ENCODE measurements at regions of chr2 and their contacts with region 1.

Region 1: GRCh38 chr2:136207030-136207623 is 89.2 kb upstream of the CXCR4 start:
- DNase-seq: peak; percentile 96
- H3K4me3 ChIP-seq: peak overlapping the region; percentile 58
- H3K27ac ChIP-seq: peak overlapping the region; percentile 97
- H3K4me1 ChIP-seq: peaks cover 66% of the 10 kb centered on the region
- CTCF ChIP-seq: peak; percentile 11; the same call in 1 of the 2 replicates

Region 2: DNA sequence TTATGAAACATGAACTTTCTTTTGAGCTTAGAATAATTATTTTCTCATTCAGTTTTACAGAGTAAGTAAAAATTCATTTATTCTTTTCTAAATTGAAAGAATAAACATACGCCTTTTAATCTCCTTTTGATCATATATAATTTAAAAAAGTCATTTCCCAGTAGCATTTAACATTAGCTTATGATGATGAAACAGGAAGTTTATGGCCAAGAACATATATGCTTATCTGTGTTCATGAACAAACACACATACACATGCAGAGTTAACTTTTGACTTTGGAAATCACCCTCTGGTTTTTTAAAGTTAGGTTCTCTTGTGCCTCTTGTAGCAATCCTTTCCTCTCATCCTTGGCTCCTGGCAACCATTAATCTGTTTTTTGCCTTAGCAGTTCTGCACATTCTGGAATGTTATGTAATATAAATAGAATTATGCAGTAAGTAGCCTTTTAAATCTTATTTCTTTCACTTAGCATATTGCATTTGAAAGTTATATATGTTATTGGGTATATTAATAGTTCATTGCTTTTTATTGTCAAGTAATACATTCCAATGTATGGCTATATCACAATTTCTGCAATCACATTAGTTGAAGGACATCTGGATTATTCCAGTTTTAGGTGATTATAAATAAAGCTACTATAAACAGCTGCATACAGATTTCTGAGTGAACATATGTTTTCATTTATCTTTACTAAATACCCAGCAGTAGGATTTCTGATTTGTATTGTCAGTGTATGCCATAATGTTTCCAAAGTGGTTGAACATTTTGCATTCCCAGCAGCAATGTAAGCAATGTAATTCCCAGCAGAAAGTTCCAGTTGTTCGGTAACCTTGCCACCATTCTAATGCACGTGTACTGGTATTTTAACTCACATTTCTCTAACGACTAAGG is 886.4 kb before region 1 on chr2:
- CTCF ChIA-PET with region 1: no interaction called
- POLR2A ChIA-PET with region 1: no interaction called
- intact Hi-C with region 1: no loop called
- DNase-seq: no peak
- H3K4me3 ChIP-seq: no peak overlapping the region
- H3K27ac ChIP-seq: no peak overlapping the region
- H3K4me1 ChIP-seq: no peaks in the 10 kb centered on the region
- CTCF ChIP-seq: no peak

Region 3: GRCh38 chr2:135913727-135914365 is 293.3 kb before region 1 on chr2:
- CTCF ChIA-PET with region 1: no interaction called
- POLR2A ChIA-PET with region 1: no interaction called
- intact Hi-C with region 1: loop called (anchors 1 kb)
- DNase-seq: peak; percentile 73
- H3K4me3 ChIP-seq: no peak overlapping the region
- H3K27ac ChIP-seq: peak overlapping the region; percentile 5
- H3K4me1 ChIP-seq: peaks cover 27% of the 10 kb centered on the region
- CTCF ChIP-seq: peak; percentile 96

Region 4: GRCh38 chr2:136029149-136029548 is 178.0 kb before region 1 on chr2:
- CTCF ChIA-PET with region 1: no interaction called
- POLR2A ChIA-PET with region 1: no interaction called
- intact Hi-C with region 1: no loop called
- DNase-seq: no peak
- H3K4me3 ChIP-seq: no peak overlapping the region
- H3K27ac ChIP-seq: no peak overlapping the region
- H3K4me1 ChIP-seq: peaks cover 9% of the 10 kb centered on the region
- CTCF ChIP-seq: no peak

Region 5: GRCh38 chr2:136117909-136118818 is 89.0 kb before region 1 on chr2 and contains the start of gene CXCR4:
- CTCF ChIA-PET with region 1: no interaction called
- POLR2A ChIA-PET with region 1: interaction called, 5 read pairs
- intact Hi-C with region 1: loop called (anchors 1 kb)
- DNase-seq: peak; percentile 89
- H3K4me3 ChIP-seq: peak within 1 kb of the TSS; percentile 92
- H3K27ac ChIP-seq: peak within 1 kb of the TSS; percentile 92
- H3K4me1 ChIP-seq: peaks cover 66% of the 10 kb centered on the region
- CTCF ChIP-seq: peak; percentile 33; the same call in 1 of the 2 replicates
- total RNA-seq, gene CXCR4: 367 and 432 TPM in 2 replicates

Region 6: GRCh38 chr2:136225950-136226835 is 19.1 kb after region 1 on chr2:
- CTCF ChIA-PET with region 1: interaction called, 7 read pairs
- POLR2A ChIA-PET with region 1: interaction called, 26 read pairs
- intact Hi-C with region 1: no loop called
- DNase-seq: no peak
- H3K4me3 ChIP-seq: no peak overlapping the region
- H3K27ac ChIP-seq: no peak overlapping the region
- H3K4me1 ChIP-seq: peaks cover 36% of the 10 kb centered on the region
- CTCF ChIP-seq: no peak

Region 7: GRCh38 chr2:136327162-136327852 is 120.2 kb after region 1 on chr2:
- CTCF ChIA-PET with region 1: interaction called, 4 read pairs
- POLR2A ChIA-PET with region 1: interaction called, 4 read pairs
- intact Hi-C with region 1: loop called (anchors 2 kb)
- DNase-seq: peak; percentile 78
- H3K4me3 ChIP-seq: peak overlapping the region; percentile 63
- H3K27ac ChIP-seq: peak overlapping the region; percentile 81
- H3K4me1 ChIP-seq: peaks cover 74% of the 10 kb centered on the region
- CTCF ChIP-seq: no peak; the same call in 1 of the 2 replicates